IMR-90 (cell line): ENCODE measurements at regions of chr2 and their contacts with region 1.

Region 1: DNA sequence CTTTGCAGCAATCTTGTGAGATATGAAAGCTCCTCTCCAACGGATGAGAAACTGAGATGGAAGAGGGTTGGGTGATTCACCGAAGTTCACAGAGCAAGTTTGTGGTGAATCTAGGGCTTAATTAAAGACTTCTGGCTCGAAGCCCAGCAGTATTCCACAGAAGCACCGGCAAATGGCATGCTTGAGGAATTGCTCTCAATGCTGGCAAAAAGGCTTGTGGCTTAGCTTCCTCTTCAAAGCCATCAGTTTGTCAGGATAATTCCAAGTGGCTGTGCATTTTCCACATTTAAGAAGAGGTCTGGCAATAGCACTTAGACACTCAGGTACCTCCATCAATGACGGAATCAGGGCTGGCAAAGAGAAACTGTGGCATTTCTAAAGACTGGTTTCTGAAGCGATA is 98.7 kb upstream of the SLC66A3 start:
- DNase-seq: peak; percentile 94
- ATAC-seq: peak; percentile 95
- H3K4me3 ChIP-seq: no peak overlapping the region
- H3K27ac ChIP-seq: no peak overlapping the region
- H3K4me1 ChIP-seq: no peaks in the 10 kb centered on the region; the same call in 1 of the 2 replicates
- H3K27me3 ChIP-seq: no peaks in the 10 kb centered on the region; the same call in 1 of the 2 replicates
- CTCF ChIP-seq: no peak
- POLR2A ChIP-seq: no peak
- RAD21 ChIP-seq: 0 out of 2 replicates have a peak, but pooled peaks have one; percentile 17

Region 2: GRCh38 chr2:11073251-11073650 is 16.6 kb after region 1 on chr2:
- CTCF ChIA-PET with region 1: interaction called, 5 read pairs
- POLR2A ChIA-PET with region 1: interaction called, 12 read pairs
- dilution Hi-C with region 1: no loop called
- in situ Hi-C with region 1: no loop called
- intact Hi-C with region 1: no loop called
- DNase-seq: peak; percentile 50
- ATAC-seq: peak; percentile 68
- H3K4me3 ChIP-seq: no peak overlapping the region
- H3K27ac ChIP-seq: peak overlapping the region; percentile 90
- H3K4me1 ChIP-seq: peaks cover 12% of the 10 kb centered on the region
- H3K27me3 ChIP-seq: no peaks in the 10 kb centered on the region
- CTCF ChIP-seq: peak; percentile 46
- POLR2A ChIP-seq: no peak
- RAD21 ChIP-seq: peak; percentile 42

Region 3: DNA sequence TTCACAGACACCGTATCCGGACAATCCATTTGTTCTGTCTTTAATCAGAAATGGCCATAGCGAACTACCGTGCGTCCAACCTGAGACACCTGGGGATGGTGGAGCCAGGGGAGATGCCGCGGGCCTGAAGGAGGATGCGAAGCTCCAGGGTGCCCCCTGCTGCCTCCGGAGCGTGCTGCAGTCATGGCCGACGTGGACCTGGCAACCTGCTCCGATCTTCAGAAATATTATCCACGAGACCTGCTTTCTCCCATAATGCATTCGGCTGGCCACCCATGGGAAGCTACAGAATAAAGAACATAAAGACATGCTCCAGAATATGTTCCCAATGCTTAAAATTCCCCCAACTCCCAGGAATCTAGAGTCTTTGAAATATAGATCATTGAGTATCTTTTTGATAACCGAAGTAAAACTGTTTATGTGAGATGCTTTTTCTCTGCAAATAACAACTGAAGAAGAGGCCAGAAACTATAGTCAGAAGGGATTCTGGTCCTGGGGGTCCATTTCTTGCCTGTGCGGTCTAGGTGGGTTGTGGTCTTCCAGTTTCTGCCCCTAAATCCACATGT is 68.0 kb after region 1 on chr2:
- CTCF ChIA-PET with region 1: no interaction called
- POLR2A ChIA-PET with region 1: no interaction called
- dilution Hi-C with region 1: no loop called
- in situ Hi-C with region 1: no loop called
- intact Hi-C with region 1: no loop called
- DNase-seq: peak; percentile 44
- ATAC-seq: peak; percentile 83
- H3K4me3 ChIP-seq: no peak overlapping the region
- H3K27ac ChIP-seq: no peak overlapping the region
- H3K4me1 ChIP-seq: peaks cover 12% of the 10 kb centered on the region
- H3K27me3 ChIP-seq: no peaks in the 10 kb centered on the region
- CTCF ChIP-seq: peak; percentile 95
- POLR2A ChIP-seq: peak; percentile 51; the same call in 1 of the 2 replicates
- RAD21 ChIP-seq: peak; percentile 99